ENCODE measurements at regions of chr19 and their contacts with region 1.

Region 1: DNA sequence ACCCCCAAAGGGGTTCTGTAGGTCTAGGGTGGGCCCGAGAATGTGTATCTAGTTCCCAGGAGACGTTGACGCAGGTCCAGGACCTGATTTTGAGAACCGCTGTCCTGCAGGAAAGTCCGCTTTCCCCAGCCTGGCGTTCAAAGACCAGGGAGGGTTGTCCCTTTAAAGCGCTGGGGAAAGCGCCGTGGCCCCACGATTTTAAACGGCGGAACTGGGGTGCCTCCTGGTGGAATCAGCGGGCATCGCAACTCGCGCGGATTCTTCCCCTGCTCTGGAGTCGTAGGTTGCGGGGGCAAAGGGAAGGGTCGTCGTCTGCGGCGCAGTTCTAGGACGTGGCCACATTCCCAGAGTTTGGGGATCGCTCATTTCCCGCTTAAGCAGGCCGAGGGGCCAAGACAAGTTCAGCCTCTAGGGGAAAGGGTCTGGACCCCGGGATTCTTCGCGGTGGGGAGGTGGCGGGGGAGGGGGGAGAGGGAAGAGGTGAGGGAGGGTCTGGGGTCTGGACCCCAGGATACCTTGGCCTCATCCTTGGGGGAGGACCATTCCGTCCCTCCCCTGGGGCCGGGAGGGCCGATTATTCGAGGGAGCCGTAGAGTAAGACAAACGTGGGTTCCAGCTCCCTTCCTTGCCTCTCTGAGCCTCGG is 7.7 kb downstream of the PNMA8B start:
- DNase-seq: peak; percentile 59 to 93 (median 82)
- ATAC-seq: peak; percentile 84 to 93 (median 90)
- H3K4me3 ChIP-seq: peak overlapping the region in 2 of 4 donors; percentile 32 to 43
- H3K27ac ChIP-seq: no peak overlapping the region
- H3K4me1 ChIP-seq: peaks cover 0 to 5% (median 5%) of the 10 kb centered on the region in 3 donors
- H3K27me3 ChIP-seq: no peaks in the 10 kb centered on the region
- CTCF ChIP-seq: peak; percentile 76 to 86 (median 82)

Region 2: GRCh38 chr19:46283771-46284170 is 204.2 kb before region 1 on chr19:
- intact Hi-C with region 1: loop called in 2 of 3 experiments (anchors 5 to 10 kb)
- DNase-seq: no peak
- ATAC-seq: no peak
- H3K4me3 ChIP-seq: no peak overlapping the region
- H3K27ac ChIP-seq: no peak overlapping the region
- H3K4me1 ChIP-seq: no peaks in the 10 kb centered on the region
- H3K27me3 ChIP-seq: no peaks in the 10 kb centered on the region
- CTCF ChIP-seq: no peak

Region 3: DNA sequence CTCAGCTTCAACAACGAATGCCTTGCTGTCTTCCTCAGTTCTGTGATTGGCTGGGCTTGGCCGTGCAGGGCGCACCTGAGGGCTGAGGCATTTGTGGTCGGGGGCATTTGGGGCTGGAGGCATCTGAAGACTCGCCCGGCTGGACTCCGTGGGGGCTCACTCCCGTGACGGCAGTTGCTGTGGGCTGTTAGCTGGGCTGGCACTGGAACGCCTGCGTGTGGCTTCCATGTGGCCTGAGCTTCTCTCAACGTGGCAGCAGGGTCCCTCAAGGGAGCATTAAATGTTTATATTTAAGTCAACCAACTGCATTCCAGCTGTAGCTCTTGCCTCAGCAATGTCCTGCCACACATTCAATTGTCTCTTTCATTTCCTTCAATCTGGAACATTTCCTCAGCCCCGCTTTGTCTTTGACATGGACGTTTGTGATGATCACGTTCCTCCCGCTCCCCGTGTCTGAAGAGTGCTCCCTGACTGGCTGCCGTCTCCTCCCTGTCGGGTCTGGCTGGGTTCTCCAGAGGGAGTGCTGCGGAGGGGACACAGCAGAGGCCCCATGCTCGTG is 95.6 kb before region 1 on chr19:
- intact Hi-C with region 1: loop called (anchors 5 kb)
- DNase-seq: peak in 2 of 6 donors; percentile 24 to 65
- ATAC-seq: no peak
- H3K4me3 ChIP-seq: no peak overlapping the region
- H3K27ac ChIP-seq: no peak overlapping the region
- H3K4me1 ChIP-seq: no peaks in the 10 kb centered on the region
- H3K27me3 ChIP-seq: no peaks in the 10 kb centered on the region
- CTCF ChIP-seq: no peak

Region 4: DNA sequence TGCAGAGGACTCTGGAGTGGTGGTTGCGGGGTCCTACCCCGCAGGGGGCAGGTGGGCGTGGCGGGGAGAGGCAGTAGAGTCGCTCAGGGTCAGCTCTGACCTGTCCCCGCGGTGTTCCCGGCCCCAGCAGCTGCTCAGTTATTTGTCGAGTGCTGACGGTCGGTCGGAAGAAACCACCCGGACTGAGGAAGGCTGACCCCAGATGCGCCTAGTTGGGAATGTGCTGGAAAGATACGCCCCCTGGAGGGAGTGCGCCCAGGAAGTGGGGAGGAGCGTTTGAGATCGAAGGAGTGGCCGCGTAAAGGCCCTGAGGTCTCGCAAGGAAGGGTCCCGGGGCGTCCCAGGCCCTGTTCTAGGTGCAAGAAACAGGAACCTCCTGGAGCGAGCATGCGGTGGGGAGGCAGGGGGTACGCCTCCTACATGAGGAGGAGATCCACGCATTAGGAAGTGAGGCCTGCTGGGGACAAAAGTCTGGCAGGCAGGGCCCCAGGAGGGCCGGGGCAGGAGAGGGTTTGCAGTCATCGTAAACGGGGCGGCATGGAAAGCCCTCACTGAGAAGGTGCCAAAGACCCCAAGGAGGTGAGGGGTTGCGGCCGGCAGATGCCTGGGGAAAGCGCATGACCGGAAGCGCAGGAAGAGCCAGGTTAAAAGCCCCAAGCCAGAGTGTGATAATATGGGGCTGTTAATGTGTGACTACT is 83.7 kb before region 1 on chr19:
- intact Hi-C with region 1: loop called in 2 of 3 experiments (anchors 5 kb)
- DNase-seq: peak; percentile 67 to 85 (median 76)
- ATAC-seq: peak; percentile 75 to 88 (median 82)
- H3K4me3 ChIP-seq: peak overlapping the region; percentile 24 to 51 (median 42)
- H3K27ac ChIP-seq: peak overlapping the region; percentile 76 to 95 (median 82)
- H3K4me1 ChIP-seq: peaks cover 0 to 8% (median 4%) of the 10 kb centered on the region in 3 donors
- H3K27me3 ChIP-seq: no peaks in the 10 kb centered on the region
- CTCF ChIP-seq: peak in 1 of 4 donors; percentile 13